G401 (cell line): ENCODE measurements at regions of chr19 and their contacts with region 1.

Region 1: DNA sequence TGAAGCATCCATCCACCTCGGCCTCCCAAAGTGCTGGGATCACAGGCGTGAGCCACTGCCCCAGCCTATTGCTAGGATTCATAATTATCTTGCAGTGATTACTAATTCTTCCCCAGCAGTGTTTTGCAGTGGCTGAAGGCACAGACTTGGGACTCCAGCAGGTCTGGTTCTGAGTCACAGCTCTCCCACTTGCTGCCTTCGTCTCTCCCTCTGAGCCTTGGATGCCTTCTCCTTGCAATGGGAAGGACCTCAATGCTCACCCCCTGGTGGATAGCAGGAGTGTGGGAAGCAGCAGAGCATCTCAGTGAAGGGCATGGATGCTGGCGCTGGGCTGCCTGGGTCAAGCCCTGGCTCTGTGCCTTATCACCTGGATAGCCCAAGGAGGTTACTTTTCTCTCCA is 37.6 kb upstream of the SHKBP1 start:
- DNase-seq: peak; percentile 32

Region 2: GRCh38 chr19:40598121-40598917 is 59.2 kb after region 1 on chr19:
- in situ Hi-C with region 1: loop called (anchors 5 kb)
- DNase-seq: peak; percentile 87

Region 3: GRCh38 chr19:40690693-40691420 is 151.8 kb after region 1 on chr19:
- in situ Hi-C with region 1: no loop called
- DNase-seq: peak; percentile 95